Heart right ventricle (tissue), 16 donors: ENCODE measurements at regions of chrX and their contacts with region 1.

Region 1: DNA sequence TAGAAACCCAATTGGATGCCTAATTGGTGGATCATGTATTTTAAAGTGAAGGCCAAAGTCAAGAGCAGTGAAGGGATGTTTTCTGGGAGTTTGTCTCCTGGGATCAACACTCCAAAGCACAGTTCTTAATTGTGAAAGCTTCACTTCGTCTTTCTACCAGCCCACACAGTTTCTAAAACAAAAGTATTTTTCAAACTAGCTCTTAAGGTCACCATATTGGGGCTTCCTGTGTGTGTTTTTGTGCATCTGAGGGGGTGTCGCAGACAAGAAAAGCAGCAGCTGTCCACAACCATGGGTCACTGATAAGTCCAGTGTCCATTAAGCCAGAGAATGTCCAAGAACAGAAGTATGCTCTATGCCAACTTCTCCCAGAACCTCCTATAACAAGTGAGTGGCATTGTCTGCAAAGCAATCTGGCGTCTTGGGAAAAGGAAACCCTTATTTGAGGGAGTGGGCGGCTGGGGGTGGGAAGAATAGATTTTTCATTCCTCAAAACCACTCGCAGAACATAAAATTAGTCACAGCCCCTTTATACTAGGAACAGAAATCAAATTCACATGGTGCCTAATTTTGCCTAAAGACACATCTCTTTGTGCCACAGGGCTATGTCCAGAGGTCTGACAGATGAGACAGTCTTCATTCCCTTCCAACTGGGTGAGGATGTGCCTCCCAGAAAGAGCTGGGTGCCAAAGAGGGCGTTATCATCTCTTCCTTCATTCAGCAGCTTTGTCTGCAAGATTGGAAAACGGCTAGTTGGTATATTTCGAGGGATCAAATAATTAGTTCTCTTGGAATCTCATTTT is 610.4 kb downstream of the BCOR start:
- DNase-seq: no peak
- ATAC-seq: peak in 1 of 8 donors; percentile 37
- H3K4me3 ChIP-seq: no peak overlapping the region
- H3K27ac ChIP-seq: no peak overlapping the region
- H3K4me1 ChIP-seq: peaks cover 0 to 14% (median 0%) of the 10 kb centered on the region in 9 donors
- H3K27me3 ChIP-seq: peaks cover 0 to 12% (median 0%) of the 10 kb centered on the region in 7 donors
- CTCF ChIP-seq: no peak

Region 2: GRCh38 chrX:39427906-39428305 is 59.5 kb before region 1 on chrX:
- intact Hi-C with region 1: loop called in 1 of 10 experiments (anchors 10 kb)
- DNase-seq: no peak
- ATAC-seq: no peak
- H3K4me3 ChIP-seq: no peak overlapping the region
- H3K27ac ChIP-seq: no peak overlapping the region
- H3K4me1 ChIP-seq: no peaks in the 10 kb centered on the region
- H3K27me3 ChIP-seq: peaks cover 0 to 14% (median 0%) of the 10 kb centered on the region in 7 donors
- CTCF ChIP-seq: no peak

Region 3: DNA sequence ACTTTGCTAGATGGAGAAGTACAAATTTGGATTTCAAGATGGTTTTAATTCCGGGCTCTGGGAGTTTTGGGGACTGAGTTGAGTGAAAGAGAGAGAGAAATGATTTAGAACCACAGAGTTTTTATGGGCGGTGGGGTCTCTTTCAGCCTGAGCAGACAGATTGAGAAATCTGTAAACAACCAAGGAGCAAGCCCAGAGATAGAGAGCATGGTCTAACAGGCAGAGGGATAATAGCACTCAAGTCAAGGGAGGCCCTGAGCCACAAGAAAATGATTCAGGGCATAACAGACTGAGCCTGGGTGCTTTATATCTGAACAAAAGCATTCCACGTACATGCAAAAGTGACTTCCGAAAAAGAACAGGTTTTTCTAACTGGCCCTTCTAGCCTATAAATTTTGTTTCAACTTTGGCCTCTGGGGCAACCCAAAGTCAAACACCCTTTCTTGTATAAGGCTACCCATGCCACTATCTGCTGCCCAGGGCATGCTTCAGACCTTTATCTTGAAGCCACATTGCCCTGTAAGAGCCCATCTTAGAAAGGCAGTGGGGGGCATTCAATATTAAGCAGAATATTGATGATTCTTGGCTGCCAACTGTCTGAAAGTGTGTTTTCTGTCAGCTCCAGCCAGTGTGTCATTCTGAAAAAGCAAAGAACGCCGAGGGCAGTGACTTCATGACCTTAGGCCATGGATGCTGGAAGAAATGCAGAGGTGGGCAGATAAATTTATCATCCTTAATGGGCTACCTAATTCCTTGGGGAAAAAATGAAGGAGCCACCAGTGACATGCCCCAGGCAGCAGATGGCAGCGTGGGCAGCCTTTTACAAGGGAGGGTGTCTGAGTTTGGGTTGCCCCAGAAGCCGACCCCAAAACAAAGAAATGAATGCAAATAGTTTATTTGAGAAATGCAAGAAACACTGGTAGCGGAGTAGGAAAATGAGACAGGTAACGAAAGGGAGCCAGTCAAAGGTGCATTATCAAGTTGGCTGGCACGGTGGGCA is 48.5 kb before region 1 on chrX:
- intact Hi-C with region 1: loop called in 1 of 10 experiments (anchors 1 kb)
- DNase-seq: no peak
- ATAC-seq: no peak
- H3K4me3 ChIP-seq: no peak overlapping the region
- H3K27ac ChIP-seq: no peak overlapping the region
- H3K4me1 ChIP-seq: peaks cover 0 to 12% (median 0%) of the 10 kb centered on the region in 9 donors
- H3K27me3 ChIP-seq: peaks cover 0 to 28% (median 0%) of the 10 kb centered on the region in 7 donors
- CTCF ChIP-seq: peak in 4 of 9 donors; percentile 21 to 31 (median 27)